ENCODE measurements at regions of chr11 and their contacts with region 1.

Region 1: GRCh38 chr11:17063171-17064002 is 14.1 kb downstream of the RPS13 start:
- DNase-seq: peak; percentile 74
- H3K4me3 ChIP-seq: no peak overlapping the region
- H3K27ac ChIP-seq: no peak overlapping the region
- H3K4me1 ChIP-seq: no peaks in the 10 kb centered on the region
- H3K27me3 ChIP-seq: no peaks in the 10 kb centered on the region
- CTCF ChIP-seq: peak; percentile 80

Region 2: GRCh38 chr11:16785520-16786128 is 277.8 kb before region 1 on chr11:
- intact Hi-C with region 1: loop called (anchors 10 kb)
- DNase-seq: peak; percentile 60
- H3K4me3 ChIP-seq: no peak overlapping the region
- H3K27ac ChIP-seq: no peak overlapping the region
- H3K4me1 ChIP-seq: no peaks in the 10 kb centered on the region
- H3K27me3 ChIP-seq: no peaks in the 10 kb centered on the region
- CTCF ChIP-seq: peak; percentile 79

Region 3: GRCh38 chr11:16820324-16821092 is 242.9 kb before region 1 on chr11:
- intact Hi-C with region 1: loop called (anchors 5 kb)
- DNase-seq: peak; percentile 78
- H3K4me3 ChIP-seq: no peak overlapping the region
- H3K27ac ChIP-seq: no peak overlapping the region
- H3K4me1 ChIP-seq: no peaks in the 10 kb centered on the region
- H3K27me3 ChIP-seq: no peaks in the 10 kb centered on the region
- CTCF ChIP-seq: peak; percentile 69

Region 4: DNA sequence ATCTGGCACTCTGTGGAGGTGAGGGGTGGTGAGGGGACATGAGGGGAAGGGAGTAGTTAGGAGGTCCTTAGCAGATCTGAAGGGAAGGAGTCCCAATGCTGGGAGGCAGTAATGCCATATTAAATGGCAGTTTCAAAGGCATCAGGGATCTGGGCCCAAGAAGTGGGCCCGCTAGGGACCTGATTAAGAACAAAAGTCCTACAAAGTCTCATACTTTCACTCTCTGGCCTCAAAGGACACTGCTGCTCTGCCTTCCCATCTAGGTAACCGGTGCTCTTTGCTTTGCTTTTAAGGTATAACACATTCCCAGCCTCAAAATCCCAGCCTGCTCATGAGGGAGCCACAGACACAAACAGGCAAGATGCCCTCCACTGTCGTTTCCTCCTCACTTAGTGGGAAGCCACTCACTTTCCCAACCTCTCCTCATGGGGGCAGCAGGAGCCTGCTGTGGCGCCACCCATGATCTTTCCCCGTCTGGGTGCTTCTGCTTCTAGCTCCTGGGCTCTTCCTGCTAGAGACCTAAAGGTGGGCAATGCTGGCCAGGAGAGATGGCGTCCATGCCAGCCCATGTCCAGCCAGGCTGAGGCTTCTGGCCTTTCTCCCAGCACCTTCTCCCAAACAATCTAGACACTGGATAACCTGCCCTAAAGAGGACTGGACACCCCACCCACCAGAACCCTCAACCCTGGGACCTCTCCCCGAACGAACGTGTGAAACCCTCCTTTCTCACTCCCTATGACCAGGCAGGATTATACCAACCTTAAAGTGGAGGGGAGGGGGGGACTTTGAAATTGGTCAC is 117.5 kb before region 1 on chr11:
- intact Hi-C with region 1: loop called (anchors 2 kb)
- DNase-seq: peak; percentile 72
- H3K4me3 ChIP-seq: no peak overlapping the region
- H3K27ac ChIP-seq: no peak overlapping the region
- H3K4me1 ChIP-seq: no peaks in the 10 kb centered on the region
- H3K27me3 ChIP-seq: no peaks in the 10 kb centered on the region
- CTCF ChIP-seq: peak; percentile 55

Region 5: DNA sequence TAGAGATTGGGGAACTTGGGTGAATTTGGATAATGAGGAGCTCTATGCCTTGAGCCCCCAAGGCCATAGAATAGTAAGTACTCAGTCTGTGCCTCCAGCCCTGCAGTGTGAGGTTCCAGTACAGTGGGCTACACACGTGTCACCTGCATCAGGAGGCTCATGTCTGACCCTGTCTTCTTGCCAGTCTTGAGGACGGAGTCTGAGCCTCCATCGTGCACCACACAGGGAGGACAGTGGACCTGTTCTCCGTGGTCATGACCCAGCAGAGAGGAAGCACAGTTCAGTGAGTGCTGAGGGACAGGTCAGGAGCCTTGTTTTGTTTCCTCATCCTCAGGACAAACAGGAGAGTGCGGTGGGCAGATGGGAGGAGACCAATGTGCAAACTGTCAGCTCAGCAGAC is 16.7 kb before region 1 on chr11:
- intact Hi-C with region 1: no loop called
- DNase-seq: no peak
- H3K4me3 ChIP-seq: no peak overlapping the region
- H3K27ac ChIP-seq: no peak overlapping the region
- H3K4me1 ChIP-seq: no peaks in the 10 kb centered on the region
- H3K27me3 ChIP-seq: no peaks in the 10 kb centered on the region
- CTCF ChIP-seq: no peak

Region 6: GRCh38 chr11:17129003-17129402 is 65.6 kb after region 1 on chr11:
- intact Hi-C with region 1: no loop called
- DNase-seq: no peak
- H3K4me3 ChIP-seq: no peak overlapping the region
- H3K27ac ChIP-seq: no peak overlapping the region
- H3K4me1 ChIP-seq: no peaks in the 10 kb centered on the region
- H3K27me3 ChIP-seq: no peaks in the 10 kb centered on the region
- CTCF ChIP-seq: no peak

Measured in colonic mucosa (tissue), 4 donors.